Aorta (tissue), 5 donors: ENCODE measurements at regions of chr16 and their contacts with region 1.

Region 1: GRCh38 chr16:57372372-57373116 is at the start of gene CX3CL1:
- DNase-seq: peak; percentile 80 to 92
- ATAC-seq: peak; percentile 93
- H3K4me3 ChIP-seq: peak within 1 kb of the TSS; percentile 52 to 69
- H3K27ac ChIP-seq: peak within 1 kb of the TSS; percentile 44 to 79
- H3K4me1 ChIP-seq: peaks cover 0 to under 1% of the 10 kb centered on the region in 2 donors
- H3K27me3 ChIP-seq: no peaks in the 10 kb centered on the region
- total RNA-seq, gene CX3CL1: 45.5 to 47.5 TPM

Region 2: DNA sequence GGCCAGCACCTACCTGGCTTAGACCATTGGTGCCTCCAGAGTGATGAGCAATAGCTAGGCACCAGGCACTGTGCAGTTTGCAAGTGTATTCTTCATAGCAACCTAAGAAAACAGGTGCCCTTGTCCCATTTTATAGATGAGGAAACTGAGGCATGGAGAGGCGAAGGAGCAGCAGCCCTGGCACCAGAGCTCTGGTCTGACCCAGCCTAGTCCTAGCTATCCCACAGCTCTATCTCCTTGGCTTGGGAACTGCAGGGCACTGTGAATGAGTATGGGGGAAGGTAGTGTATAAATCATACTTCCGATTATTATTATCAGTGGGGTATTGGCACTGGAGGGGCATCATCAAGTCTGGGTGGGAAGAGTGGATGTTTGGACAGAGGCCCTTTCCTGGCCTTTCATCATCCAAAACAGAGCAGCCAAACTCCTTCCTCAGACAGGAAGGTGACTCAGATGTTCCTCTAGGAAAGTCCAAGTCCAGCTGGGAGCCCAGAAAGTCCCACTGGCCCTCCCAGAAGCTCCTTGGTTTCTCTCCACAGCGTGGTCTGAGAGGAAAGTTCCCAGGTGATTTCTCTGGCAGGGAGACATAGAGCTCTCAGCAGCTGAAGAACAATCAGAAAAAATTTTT is 56.0 kb before region 1 on chr16:
- intact Hi-C with region 1: loop called (anchors 2 to 5 kb)
- DNase-seq: peak; percentile 77 to 81
- ATAC-seq: peak; percentile 91
- H3K4me3 ChIP-seq: no peak overlapping the region
- H3K27ac ChIP-seq: peak overlapping the region; percentile 72 to 99
- H3K4me1 ChIP-seq: peaks cover 7 to 10% of the 10 kb centered on the region in 2 donors
- H3K27me3 ChIP-seq: no peaks in the 10 kb centered on the region

Region 3: DNA sequence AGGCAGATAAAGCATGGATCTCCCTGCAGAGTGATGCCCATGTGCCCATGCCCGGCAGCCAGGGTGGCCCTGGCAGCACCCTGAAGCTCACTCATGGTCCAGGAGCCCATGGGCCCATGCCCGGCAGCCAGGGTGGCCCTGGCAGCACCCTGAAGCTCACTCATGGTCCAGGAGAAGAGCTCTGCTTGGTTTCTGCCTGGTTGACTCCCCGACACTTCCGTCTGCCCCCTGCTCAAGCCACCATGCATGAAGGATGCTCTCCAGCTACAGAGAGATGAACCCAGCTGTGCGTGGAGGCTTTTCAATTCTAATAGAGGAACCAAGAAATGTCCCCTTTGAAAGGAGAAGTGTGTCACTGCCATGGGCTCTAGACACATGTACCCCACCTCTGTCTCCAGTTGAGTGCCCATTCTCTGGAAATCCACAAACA is 40.8 kb after region 1 on chr16:
- intact Hi-C with region 1: loop called (anchors 5 kb)
- DNase-seq: no peak
- ATAC-seq: no peak
- H3K4me3 ChIP-seq: no peak overlapping the region
- H3K27ac ChIP-seq: no peak overlapping the region
- H3K4me1 ChIP-seq: no peaks in the 10 kb centered on the region
- H3K27me3 ChIP-seq: no peaks in the 10 kb centered on the region